ENCODE measurements at regions of chr9 and their contacts with region 1.

Region 1: DNA sequence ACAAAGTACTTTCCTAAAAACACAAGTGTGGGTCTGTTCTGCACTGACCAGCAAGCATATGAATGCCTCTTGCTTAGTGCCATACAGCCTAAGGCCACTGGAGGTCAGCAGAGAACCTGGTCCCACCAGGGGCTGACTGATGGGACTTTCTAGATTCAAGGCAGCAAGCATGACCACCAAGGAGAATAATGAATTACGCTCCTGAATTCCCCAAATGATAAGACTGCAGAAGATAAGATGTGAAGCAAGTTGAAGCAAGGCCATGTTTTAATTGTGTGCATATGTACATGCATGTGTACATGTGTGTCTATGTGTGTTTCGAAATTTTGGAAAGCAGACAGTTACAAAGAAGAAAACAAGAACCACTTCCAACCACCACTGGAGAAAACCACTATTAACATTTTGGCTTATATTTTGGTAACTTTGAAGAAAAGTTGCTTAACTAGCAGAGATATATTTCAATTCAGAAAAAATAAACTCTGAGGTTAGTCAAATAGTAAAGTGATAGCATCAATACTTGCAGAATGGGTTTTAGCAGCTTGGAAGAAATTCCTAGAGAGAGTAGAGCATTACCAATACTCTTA is 70.5 kb downstream of the ERP44 start:
- DNase-seq: peak; percentile 76 to 82
- H3K4me3 ChIP-seq: no peak overlapping the region
- H3K4me3 Mint-ChIP-seq: no peak overlapping the region
- H3K27ac Mint-ChIP-seq: no peak overlapping the region
- H3K4me1 ChIP-seq: no peaks in the 10 kb centered on the region
- H3K4me1 Mint-ChIP-seq: no peaks in the 10 kb centered on the region
- H3K27me3 ChIP-seq: no peaks in the 10 kb centered on the region
- H3K27me3 Mint-ChIP-seq: no peaks in the 10 kb centered on the region
- CTCF ChIP-seq: peak; percentile 84 to 95

Region 2: DNA sequence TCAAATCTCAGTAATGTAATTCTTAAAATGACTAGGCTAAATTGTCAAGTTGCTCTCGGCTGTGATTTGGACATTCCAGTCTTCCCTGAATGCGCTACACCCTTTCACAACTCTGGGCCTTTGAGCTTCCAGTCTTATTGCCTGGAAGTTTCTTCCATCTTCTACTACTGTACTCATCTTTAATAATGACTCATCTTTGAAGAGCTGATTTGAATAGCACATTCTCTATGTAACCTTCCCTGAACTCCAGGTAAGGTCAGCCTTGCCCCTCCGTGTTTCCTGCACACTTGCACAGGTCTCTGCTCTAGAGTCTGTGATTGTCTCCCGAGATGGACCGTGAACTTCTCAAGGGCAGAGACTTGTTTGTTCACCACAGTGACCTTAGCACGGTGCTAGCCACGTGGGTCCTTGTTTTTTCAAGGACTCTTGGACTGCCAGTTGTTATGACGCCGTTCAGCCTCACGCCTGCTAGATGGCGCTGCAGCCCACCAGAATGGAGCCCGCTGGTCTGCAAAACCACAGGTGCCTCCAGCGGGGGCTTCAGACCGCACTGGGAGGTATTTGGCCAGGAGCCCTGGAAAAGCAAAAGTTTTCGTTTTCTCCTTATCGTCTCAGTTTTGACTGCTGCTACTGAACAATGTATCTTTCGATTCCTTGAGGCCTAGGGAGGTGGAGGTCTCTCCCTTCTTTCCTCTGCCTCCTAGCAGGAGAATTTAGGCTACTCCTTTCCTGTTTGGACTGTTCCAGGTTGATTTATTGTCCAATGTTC is 761.9 kb before region 1 on chr9:
- CTCF ChIA-PET with region 1: no interaction called
- POLR2A ChIA-PET with region 1: no interaction called
- intact Hi-C with region 1: loop called (anchors 1 kb)
- DNase-seq: peak; percentile 69 to 74
- H3K4me3 ChIP-seq: no peak overlapping the region
- H3K4me3 Mint-ChIP-seq: no peak overlapping the region
- H3K27ac Mint-ChIP-seq: no peak overlapping the region
- H3K4me1 ChIP-seq: no peaks in the 10 kb centered on the region
- H3K4me1 Mint-ChIP-seq: peaks cover 11% of the 10 kb centered on the region
- H3K27me3 ChIP-seq: no peaks in the 10 kb centered on the region
- H3K27me3 Mint-ChIP-seq: peaks cover 12% of the 10 kb centered on the region
- CTCF ChIP-seq: peak; percentile 76 to 79

Region 3: GRCh38 chr9:100098887-100099721 is 70.8 kb after region 1 on chr9 and contains the starts of genes ERP44 and INVS:
- CTCF ChIA-PET with region 1: no interaction called
- POLR2A ChIA-PET with region 1: no interaction called
- intact Hi-C with region 1: loop called (anchors 2 kb)
- DNase-seq: peak; percentile 98 to 99
- H3K4me3 ChIP-seq: peak within 1 kb of the TSS; percentile 99
- H3K4me3 Mint-ChIP-seq: peak within 1 kb of the TSS; percentile 96
- H3K27ac Mint-ChIP-seq: peak within 1 kb of the TSS; percentile 97
- H3K4me1 ChIP-seq: peaks cover 6% of the 10 kb centered on the region; the same call in 1 of the 2 replicates
- H3K4me1 Mint-ChIP-seq: peaks cover 7% of the 10 kb centered on the region
- H3K27me3 ChIP-seq: no peaks in the 10 kb centered on the region
- H3K27me3 Mint-ChIP-seq: no peaks in the 10 kb centered on the region
- CTCF ChIP-seq: no peak
- total RNA-seq, gene ERP44: 23.9 and 25.6 TPM in 2 replicates
- total RNA-seq, gene INVS: 15.6 and 17.3 TPM in 2 replicates

Region 4: GRCh38 chr9:100222674-100223073 is 194.4 kb after region 1 on chr9:
- CTCF ChIA-PET with region 1: interaction called, 3 read pairs
- POLR2A ChIA-PET with region 1: no interaction called
- intact Hi-C with region 1: loop called (anchors 1 kb)
- DNase-seq: peak in 1 of 2 experiments; percentile 19
- H3K4me3 ChIP-seq: no peak overlapping the region
- H3K4me3 Mint-ChIP-seq: no peak overlapping the region
- H3K27ac Mint-ChIP-seq: no peak overlapping the region
- H3K4me1 ChIP-seq: no peaks in the 10 kb centered on the region
- H3K4me1 Mint-ChIP-seq: no peaks in the 10 kb centered on the region
- H3K27me3 ChIP-seq: no peaks in the 10 kb centered on the region
- H3K27me3 Mint-ChIP-seq: no peaks in the 10 kb centered on the region
- CTCF ChIP-seq: peak; percentile 23 to 44

Region 5: DNA sequence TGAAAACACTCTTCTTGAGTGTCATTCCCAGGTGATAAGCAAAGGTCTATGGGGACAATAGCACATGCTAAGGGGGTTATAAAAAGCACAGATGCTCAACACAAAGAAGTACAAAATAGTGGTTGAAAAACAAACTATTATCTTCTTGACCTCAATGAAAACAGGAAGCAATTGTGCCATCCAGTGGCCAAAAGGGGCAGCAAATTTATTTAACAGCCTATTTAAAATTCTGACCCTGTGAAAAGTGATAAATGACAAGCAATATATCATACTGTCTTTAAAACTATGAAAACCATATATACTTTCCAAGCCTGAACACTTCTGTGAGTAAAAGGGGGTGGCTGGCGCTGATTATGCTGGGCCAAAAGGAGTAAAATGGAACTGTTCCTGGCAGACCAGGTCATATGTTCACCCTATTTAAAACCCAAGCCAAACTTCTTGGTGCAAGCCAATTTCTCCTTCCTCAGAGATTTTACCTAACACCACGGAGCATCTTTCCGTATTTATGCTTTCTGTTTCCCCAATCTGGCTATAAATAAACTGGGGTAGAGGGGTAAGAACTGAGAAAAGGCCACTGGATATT is 294.8 kb after region 1 on chr9:
- CTCF ChIA-PET with region 1: no interaction called
- POLR2A ChIA-PET with region 1: no interaction called
- intact Hi-C with region 1: loop called (anchors 1 kb)
- DNase-seq: peak; percentile 26 to 44
- H3K4me3 ChIP-seq: no peak overlapping the region
- H3K4me3 Mint-ChIP-seq: no peak overlapping the region
- H3K27ac Mint-ChIP-seq: no peak overlapping the region
- H3K4me1 ChIP-seq: no peaks in the 10 kb centered on the region
- H3K4me1 Mint-ChIP-seq: no peaks in the 10 kb centered on the region
- H3K27me3 ChIP-seq: no peaks in the 10 kb centered on the region
- H3K27me3 Mint-ChIP-seq: no peaks in the 10 kb centered on the region
- CTCF ChIP-seq: peak; percentile 53 to 58